Mammary epithelial cell (primary cell): ENCODE measurements at regions of chr2 and their contacts with region 1.

Region 1: DNA sequence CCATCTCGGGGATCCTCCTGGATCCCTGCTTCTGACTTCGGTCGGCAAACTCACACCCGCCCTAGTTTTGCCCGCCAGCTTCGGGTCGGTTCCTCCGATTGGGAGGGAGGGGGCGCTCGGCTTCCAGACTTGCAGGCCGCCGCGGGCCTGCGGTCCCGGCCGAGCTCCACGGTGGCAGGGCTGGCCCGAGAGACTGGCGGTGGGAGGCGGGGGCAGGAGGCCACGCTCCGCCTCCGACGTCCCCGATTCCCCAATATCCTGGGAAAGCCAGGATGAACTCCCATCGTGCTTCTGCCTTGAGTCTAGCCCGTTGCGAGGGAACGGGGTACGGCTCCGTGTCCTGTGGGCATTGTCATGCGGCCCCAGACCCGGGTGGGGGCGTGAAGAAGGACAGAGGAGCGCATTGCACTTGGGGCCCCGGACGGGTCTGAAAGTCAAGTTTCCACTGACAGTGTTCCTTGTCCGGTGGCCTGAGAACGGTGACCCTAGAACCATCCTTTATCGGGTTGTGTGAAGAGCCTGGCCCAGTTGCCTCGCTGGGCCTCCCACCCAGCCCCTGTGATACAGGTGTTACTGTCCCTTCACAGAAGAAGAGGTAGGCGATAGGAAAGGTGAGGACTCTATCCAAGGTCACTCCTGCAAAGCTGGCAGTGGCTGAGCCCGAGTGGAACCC is 2.4 kb upstream of the INHBB start:
- DNase-seq: peak; percentile 57
- H3K4me3 ChIP-seq: peak overlapping the region in 1 of 3 experiments; percentile 3
- H3K27ac ChIP-seq: no peak overlapping the region
- H3K4me1 ChIP-seq: peaks cover 23% of the 10 kb centered on the region
- H3K27me3 ChIP-seq: peaks cover 44% of the 10 kb centered on the region
- CTCF ChIP-seq: peak; percentile 48 to 85

Region 2: GRCh38 chr2:120134263-120134662 is 209.3 kb before region 1 on chr2:
- CTCF ChIA-PET with region 1: no interaction called
- dilution Hi-C with region 1: no loop called
- in situ Hi-C with region 1: no loop called
- intact Hi-C with region 1: no loop called
- DNase-seq: peak; percentile 96
- H3K4me3 ChIP-seq: no peak overlapping the region
- H3K27ac ChIP-seq: peak overlapping the region; percentile 19
- H3K4me1 ChIP-seq: peaks cover 17% of the 10 kb centered on the region
- H3K27me3 ChIP-seq: no peaks in the 10 kb centered on the region
- CTCF ChIP-seq: no peak

Region 3: DNA sequence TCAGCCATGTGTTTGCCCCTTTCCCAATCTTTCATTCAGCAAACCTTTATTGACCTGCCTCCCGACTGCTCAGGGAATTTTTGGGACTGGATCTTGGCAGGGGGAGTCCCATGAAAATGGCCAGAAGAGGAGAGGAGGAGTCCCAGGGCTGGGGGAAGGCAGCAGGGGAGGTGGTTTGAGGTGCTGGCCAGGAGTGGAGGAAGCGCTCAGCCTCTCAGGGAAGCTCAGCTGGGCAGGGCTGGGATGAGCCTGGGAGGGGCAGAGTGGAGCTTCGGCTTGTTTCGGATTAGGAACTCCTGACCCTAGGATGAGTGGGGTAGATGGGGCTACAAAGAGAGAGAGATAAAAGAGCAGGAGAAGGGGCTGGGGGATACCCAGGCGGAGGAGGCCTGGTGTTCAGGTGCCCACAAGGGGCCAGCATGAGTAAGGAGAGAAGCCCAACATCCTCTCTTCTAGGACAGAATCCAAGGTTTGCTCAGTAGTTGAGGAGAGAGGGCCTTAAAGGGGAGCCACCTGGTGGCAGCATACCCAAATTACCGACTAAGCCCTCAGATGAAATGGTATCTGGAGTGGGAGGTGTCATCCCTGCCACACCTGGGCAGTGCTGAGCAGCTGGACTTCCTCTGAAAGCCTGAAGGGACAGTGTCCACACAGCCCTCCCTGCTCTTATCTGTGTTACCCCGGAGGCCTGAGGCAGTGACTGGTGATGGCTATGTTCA is 93.5 kb after region 1 on chr2:
- CTCF ChIA-PET with region 1: no interaction called
- dilution Hi-C with region 1: no loop called
- in situ Hi-C with region 1: no loop called
- intact Hi-C with region 1: no loop called
- DNase-seq: peak; percentile 54
- H3K4me3 ChIP-seq: no peak overlapping the region
- H3K27ac ChIP-seq: no peak overlapping the region
- H3K4me1 ChIP-seq: peaks cover 4% of the 10 kb centered on the region
- H3K27me3 ChIP-seq: peaks cover 5% of the 10 kb centered on the region
- CTCF ChIP-seq: peak; percentile 66 to 74

Region 4: GRCh38 chr2:120453635-120453998 is 110.0 kb after region 1 on chr2:
- CTCF ChIA-PET with region 1: no interaction called
- dilution Hi-C with region 1: no loop called
- in situ Hi-C with region 1: no loop called
- intact Hi-C with region 1: loop called (anchors 10 kb)
- DNase-seq: no peak
- H3K4me3 ChIP-seq: no peak overlapping the region
- H3K27ac ChIP-seq: no peak overlapping the region
- H3K4me1 ChIP-seq: no peaks in the 10 kb centered on the region
- H3K27me3 ChIP-seq: no peaks in the 10 kb centered on the region
- CTCF ChIP-seq: no peak

Region 5: GRCh38 chr2:120470041-120470965 is 126.7 kb after region 1 on chr2:
- CTCF ChIA-PET with region 1: no interaction called
- dilution Hi-C with region 1: no loop called
- in situ Hi-C with region 1: no loop called
- intact Hi-C with region 1: no loop called
- DNase-seq: peak; percentile 87
- H3K4me3 ChIP-seq: no peak overlapping the region
- H3K27ac ChIP-seq: peak overlapping the region; percentile 88
- H3K4me1 ChIP-seq: peaks cover 48% of the 10 kb centered on the region
- H3K27me3 ChIP-seq: no peaks in the 10 kb centered on the region
- CTCF ChIP-seq: no peak

Region 6: DNA sequence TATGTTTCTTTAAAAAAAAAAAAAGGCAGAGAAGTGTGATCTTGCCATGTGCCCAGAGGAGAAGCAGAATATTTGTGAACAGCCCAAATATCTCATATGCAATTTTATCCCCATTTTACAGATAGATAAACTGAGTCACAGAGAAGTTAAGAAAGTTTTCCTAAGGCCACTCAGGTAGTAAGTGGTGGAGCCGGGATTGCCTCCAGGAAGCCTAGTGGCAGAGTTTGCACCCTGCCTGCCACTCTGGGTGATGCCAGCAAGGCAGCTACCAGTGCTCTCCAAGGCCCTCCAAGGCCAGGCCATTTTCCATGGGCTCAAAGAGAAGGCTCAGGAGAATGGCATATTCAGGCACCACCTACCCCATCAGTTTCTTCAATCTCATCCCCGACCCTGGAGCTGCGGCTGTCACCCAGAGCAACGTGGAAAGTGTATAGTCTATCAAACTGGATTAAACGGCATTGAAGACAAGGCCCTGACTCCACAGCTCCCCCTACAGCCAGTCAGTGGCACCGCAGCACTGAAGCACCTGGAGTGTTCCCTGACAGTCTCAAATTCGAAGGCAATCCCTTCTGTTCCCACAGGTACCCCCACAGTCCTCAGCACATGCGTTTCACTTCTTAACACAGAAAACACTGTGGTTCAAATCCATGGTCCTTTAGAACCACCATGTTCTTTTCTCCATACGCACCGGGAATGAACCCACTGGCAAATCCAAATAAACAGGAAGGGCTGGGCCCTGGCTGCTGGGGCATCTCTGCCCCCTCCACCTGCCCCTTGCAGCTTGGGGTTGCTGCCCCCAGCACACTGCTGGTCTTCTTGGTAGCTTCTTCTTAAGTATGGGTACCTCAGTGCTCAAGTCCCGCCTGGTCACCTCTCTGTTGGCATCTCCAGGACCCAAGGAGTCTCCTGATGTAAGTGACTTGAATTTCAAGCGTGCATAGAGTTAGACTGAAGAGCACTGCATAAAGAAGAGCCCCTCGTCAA is 177.7 kb after region 1 on chr2:
- CTCF ChIA-PET with region 1: no interaction called
- dilution Hi-C with region 1: no loop called
- in situ Hi-C with region 1: loop called in 1 of 2 experiments (anchors 25 kb)
- intact Hi-C with region 1: loop called (anchors 1 kb)
- DNase-seq: peak; percentile 24
- H3K4me3 ChIP-seq: no peak overlapping the region
- H3K27ac ChIP-seq: no peak overlapping the region
- H3K4me1 ChIP-seq: no peaks in the 10 kb centered on the region
- H3K27me3 ChIP-seq: no peaks in the 10 kb centered on the region
- CTCF ChIP-seq: peak; percentile 89 to 98

Region 7: GRCh38 chr2:120539937-120540718 is 196.6 kb after region 1 on chr2:
- CTCF ChIA-PET with region 1: no interaction called
- dilution Hi-C with region 1: no loop called
- in situ Hi-C with region 1: loop called in 1 of 2 experiments (anchors 25 kb)
- intact Hi-C with region 1: no loop called
- DNase-seq: peak; percentile 67
- H3K4me3 ChIP-seq: no peak overlapping the region
- H3K27ac ChIP-seq: no peak overlapping the region
- H3K4me1 ChIP-seq: peaks cover 16% of the 10 kb centered on the region
- H3K27me3 ChIP-seq: no peaks in the 10 kb centered on the region
- CTCF ChIP-seq: no peak

Region 8: DNA sequence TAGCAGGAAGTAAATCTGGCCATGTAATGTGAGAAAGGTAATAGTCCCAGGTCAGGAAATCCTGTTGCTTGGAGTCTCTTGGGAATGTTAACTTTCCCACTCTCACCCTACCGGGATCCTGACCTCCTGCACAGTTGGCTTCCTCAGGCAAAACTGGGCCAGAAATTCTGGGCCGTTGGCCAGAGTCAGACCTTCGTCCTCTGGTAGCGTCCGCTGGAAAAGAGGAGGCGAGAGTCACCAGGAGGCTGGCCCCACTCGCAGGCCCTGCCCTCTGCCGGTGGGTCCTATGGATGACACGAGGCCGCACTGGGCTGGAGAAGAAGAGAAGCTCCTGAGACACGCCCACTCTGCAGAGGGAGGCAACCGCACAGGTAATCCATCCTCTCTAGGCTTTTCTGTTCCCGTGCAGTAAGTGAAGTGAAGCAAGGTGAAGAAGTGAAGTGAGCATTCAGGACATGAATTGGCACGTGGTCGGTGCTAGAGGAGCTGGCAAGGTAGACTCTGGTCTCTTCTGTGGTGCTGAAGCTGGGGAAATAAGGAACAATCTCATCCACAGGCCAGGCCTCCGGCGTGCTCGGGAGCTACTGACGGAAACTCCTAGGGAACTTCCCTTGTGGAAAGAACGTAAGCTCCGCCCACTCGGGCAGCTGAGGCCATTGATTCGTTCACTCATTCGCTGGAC is 209.4 kb after region 1 on chr2:
- CTCF ChIA-PET with region 1: no interaction called
- dilution Hi-C with region 1: no loop called
- in situ Hi-C with region 1: loop called in 1 of 2 experiments (anchors 25 kb)
- intact Hi-C with region 1: loop called (anchors 1 kb)
- DNase-seq: peak; percentile 81
- H3K4me3 ChIP-seq: no peak overlapping the region
- H3K27ac ChIP-seq: no peak overlapping the region
- H3K4me1 ChIP-seq: no peaks in the 10 kb centered on the region
- H3K27me3 ChIP-seq: no peaks in the 10 kb centered on the region
- CTCF ChIP-seq: peak; percentile 70 to 88

Region 9: DNA sequence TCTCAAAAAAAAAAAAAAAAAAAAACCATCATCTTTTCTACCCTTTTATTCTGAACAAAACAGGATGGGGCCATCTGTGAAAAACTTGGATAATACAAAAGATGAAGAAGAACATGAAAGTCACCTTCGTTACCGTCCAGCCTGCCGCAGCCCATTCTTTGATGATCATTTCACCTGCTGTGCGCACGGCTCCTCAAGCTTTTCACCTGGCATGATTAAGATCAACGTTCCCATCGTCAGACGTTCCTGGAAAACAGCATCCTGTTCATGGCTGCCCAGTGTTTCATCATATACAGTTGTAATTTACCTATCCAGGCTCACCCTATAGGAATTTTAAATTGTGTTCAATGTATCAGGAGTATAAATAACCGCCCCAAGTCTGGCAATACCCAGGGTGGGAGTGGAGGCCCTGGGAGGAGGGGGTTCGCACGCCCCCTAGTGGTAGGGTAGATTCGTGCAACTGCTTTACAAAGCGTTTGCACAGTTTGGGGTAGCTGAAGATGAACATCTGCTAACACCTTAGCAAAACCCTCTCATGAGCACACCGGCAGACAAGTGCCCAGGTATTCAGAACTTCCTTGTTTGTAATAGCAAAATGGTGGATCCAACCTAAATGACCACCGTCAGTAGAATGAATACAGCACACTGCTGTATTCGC is 343.1 kb after region 1 on chr2:
- CTCF ChIA-PET with region 1: no interaction called
- dilution Hi-C with region 1: no loop called
- in situ Hi-C with region 1: loop called (anchors 5 to 10 kb)
- intact Hi-C with region 1: no loop called
- DNase-seq: no peak
- H3K4me3 ChIP-seq: no peak overlapping the region
- H3K27ac ChIP-seq: no peak overlapping the region
- H3K4me1 ChIP-seq: no peaks in the 10 kb centered on the region
- H3K27me3 ChIP-seq: no peaks in the 10 kb centered on the region
- CTCF ChIP-seq: peak; percentile 41 to 51